ENCODE measurements at regions of chr10 and their contacts with region 1.

Region 1: GRCh38 chr10:57657164-57657765 is 610.4 kb downstream of the IPMK start:
- DNase-seq: peak; percentile 30
- H3K4me3 ChIP-seq: no peak overlapping the region
- H3K27ac ChIP-seq: no peak overlapping the region
- H3K4me1 ChIP-seq: no peaks in the 10 kb centered on the region
- H3K27me3 ChIP-seq: peaks cover 2% of the 10 kb centered on the region
- CTCF ChIP-seq: peak; percentile 80 to 87

Region 2: GRCh38 chr10:57338823-57339558 is 318.3 kb before region 1 on chr10:
- CTCF ChIA-PET with region 1: no interaction called
- dilution Hi-C with region 1: no loop called
- in situ Hi-C with region 1: loop called (anchors 25 kb)
- intact Hi-C with region 1: loop called (anchors 1 kb)
- DNase-seq: peak; percentile 12
- H3K4me3 ChIP-seq: no peak overlapping the region
- H3K27ac ChIP-seq: no peak overlapping the region
- H3K4me1 ChIP-seq: no peaks in the 10 kb centered on the region
- H3K27me3 ChIP-seq: no peaks in the 10 kb centered on the region
- CTCF ChIP-seq: peak; percentile 52 to 70

Region 3: GRCh38 chr10:57579926-57580325 is 77.3 kb before region 1 on chr10:
- CTCF ChIA-PET with region 1: interaction called, 3 read pairs
- dilution Hi-C with region 1: no loop called
- in situ Hi-C with region 1: loop called (anchors 5 kb)
- intact Hi-C with region 1: loop called (anchors 1 kb)
- DNase-seq: peak; percentile 27
- H3K4me3 ChIP-seq: no peak overlapping the region
- H3K27ac ChIP-seq: no peak overlapping the region
- H3K4me1 ChIP-seq: no peaks in the 10 kb centered on the region
- H3K27me3 ChIP-seq: peaks cover under 1% of the 10 kb centered on the region
- CTCF ChIP-seq: peak; percentile 37 to 75

Region 4: DNA sequence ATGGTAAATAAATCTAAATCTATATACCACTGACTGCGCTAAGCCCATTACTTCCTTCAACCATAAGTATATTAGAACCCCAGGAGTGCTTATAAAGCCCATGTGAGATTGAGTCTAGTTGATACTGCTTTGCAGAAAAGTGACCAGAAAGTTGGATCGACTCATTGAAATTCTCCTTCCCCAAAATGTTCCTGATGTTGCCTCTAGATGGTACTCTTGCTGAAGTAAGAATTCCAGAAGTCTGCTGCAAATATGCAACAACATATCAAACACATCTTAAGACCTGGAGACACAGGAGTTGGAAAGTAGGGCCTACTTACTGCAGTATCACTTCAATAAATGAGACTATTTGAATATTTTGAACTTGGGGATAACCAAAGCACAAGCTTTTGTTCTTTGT is 59.6 kb after region 1 on chr10:
- CTCF ChIA-PET with region 1: no interaction called
- dilution Hi-C with region 1: no loop called
- in situ Hi-C with region 1: no loop called
- intact Hi-C with region 1: loop called (anchors 5 kb)
- DNase-seq: peak; percentile 45
- H3K4me3 ChIP-seq: no peak overlapping the region
- H3K27ac ChIP-seq: no peak overlapping the region
- H3K4me1 ChIP-seq: no peaks in the 10 kb centered on the region
- H3K27me3 ChIP-seq: no peaks in the 10 kb centered on the region
- CTCF ChIP-seq: peak; percentile 56 to 75

Region 5: GRCh38 chr10:57785546-57786284 is 128.4 kb after region 1 on chr10:
- CTCF ChIA-PET with region 1: no interaction called
- dilution Hi-C with region 1: no loop called
- in situ Hi-C with region 1: no loop called
- intact Hi-C with region 1: no loop called
- DNase-seq: peak; percentile 60
- H3K4me3 ChIP-seq: no peak overlapping the region
- H3K27ac ChIP-seq: peak overlapping the region; percentile 30
- H3K4me1 ChIP-seq: peaks cover 20% of the 10 kb centered on the region
- H3K27me3 ChIP-seq: no peaks in the 10 kb centered on the region
- CTCF ChIP-seq: no peak

Region 6: DNA sequence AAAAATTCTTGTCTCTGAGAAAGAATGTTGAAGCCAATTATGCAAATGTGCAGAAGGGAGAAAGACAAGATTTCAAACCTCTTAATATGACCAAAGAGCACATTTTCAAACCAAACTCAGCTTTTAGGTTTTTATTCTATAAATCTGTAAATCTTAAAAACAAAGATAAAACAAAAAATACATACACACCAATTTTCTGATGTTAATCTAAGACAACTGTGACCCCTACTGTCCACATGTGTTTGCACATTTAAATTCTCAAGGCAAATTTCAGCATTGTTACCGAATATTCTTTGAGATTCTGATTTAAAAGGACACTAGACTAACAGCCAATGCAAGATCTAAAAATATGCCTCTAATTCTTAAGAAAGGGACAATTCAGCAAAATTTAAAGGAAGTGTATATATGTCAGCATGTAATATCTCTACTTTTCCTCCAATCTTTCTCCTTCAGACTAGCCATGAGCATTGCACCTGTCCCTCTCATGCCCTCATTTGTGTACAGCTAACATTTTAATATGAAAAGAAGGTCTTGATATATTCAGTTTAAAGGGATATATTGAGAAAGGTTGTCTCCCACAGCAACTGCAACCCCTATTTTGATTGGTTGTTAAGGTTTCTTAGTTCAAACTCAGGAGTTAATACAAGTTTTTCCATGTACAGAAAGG is 192.6 kb after region 1 on chr10:
- CTCF ChIA-PET with region 1: no interaction called
- dilution Hi-C with region 1: no loop called
- in situ Hi-C with region 1: no loop called
- intact Hi-C with region 1: loop called (anchors 2 kb)
- DNase-seq: peak; percentile 13
- H3K4me3 ChIP-seq: no peak overlapping the region
- H3K27ac ChIP-seq: no peak overlapping the region
- H3K4me1 ChIP-seq: no peaks in the 10 kb centered on the region
- H3K27me3 ChIP-seq: no peaks in the 10 kb centered on the region
- CTCF ChIP-seq: peak; percentile 50 to 53

Region 7: DNA sequence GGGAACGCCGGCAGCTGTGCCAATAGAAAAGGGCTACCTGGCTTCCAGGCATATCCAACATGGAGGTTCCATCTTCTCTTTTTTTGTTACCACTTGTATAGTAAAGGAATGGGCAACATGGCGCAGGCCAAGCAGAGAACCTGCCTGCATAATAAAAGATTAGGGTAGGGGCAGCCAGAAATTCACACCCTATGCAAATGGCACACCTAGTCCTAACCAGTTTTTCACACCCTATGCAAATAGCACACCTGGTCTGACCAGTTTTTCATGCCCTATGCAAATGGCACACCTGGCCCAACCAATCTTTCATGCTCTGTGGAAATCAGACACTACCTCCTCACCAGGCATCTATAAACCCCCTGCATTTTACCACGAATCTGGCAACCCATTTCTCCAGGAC is 241.0 kb after region 1 on chr10:
- CTCF ChIA-PET with region 1: no interaction called
- dilution Hi-C with region 1: no loop called
- in situ Hi-C with region 1: no loop called
- intact Hi-C with region 1: no loop called
- DNase-seq: peak; percentile 11
- H3K4me3 ChIP-seq: no peak overlapping the region
- H3K27ac ChIP-seq: no peak overlapping the region
- H3K4me1 ChIP-seq: no peaks in the 10 kb centered on the region
- H3K27me3 ChIP-seq: no peaks in the 10 kb centered on the region
- CTCF ChIP-seq: no peak

Region 8: DNA sequence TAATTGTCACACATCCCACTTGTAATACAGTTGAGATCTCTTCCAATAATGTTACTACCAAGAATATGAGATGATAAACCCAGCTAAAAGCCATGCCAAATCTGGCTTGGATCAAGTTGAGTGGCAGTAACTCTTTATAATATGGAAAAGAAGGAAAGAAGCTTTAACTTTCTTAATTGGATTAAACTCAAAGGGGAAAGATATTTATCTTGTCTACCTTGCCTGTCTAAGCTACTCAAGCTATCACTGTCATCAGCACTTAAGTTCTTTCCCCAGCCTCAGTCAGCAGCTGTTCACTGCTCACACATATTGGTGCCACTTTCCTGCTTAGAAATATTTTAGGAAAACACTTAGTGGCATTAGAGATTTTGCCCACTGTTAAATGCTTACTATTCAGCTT is 259.8 kb after region 1 on chr10:
- CTCF ChIA-PET with region 1: no interaction called
- dilution Hi-C with region 1: no loop called
- in situ Hi-C with region 1: no loop called
- intact Hi-C with region 1: no loop called
- DNase-seq: no peak
- H3K4me3 ChIP-seq: no peak overlapping the region
- H3K27ac ChIP-seq: no peak overlapping the region
- H3K4me1 ChIP-seq: peaks cover 7% of the 10 kb centered on the region
- H3K27me3 ChIP-seq: no peaks in the 10 kb centered on the region
- CTCF ChIP-seq: no peak

Region 9: DNA sequence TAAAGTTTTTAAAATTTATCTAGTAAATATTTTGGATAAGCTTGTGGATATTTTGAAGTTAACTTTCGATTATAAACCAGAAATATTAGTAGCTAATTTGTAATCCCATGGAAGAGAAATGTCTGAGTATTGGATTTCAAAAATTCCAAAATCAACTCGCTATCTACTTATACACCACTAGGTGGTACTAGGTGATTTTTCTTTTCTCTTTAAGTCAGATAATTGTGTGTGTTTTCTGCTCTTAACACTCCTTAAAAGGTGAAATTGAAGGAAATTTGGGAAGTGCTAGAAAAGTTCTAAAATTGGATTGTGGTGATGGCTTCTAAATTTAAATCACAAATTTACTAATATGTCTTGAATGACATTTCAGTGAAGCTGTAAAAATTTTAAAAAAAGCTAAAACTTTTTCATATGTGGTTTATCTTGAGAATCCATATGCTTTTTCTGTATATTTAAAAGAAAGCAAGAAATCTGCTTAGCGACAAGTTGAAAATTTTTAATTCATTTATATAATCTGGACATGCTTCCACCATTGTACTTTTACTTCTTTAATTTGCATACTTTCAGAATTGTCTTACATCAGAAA is 520.2 kb after region 1 on chr10:
- CTCF ChIA-PET with region 1: no interaction called
- dilution Hi-C with region 1: no loop called
- in situ Hi-C with region 1: no loop called
- intact Hi-C with region 1: no loop called
- DNase-seq: no peak
- H3K4me3 ChIP-seq: no peak overlapping the region
- H3K27ac ChIP-seq: no peak overlapping the region
- H3K4me1 ChIP-seq: peaks cover 18% of the 10 kb centered on the region
- H3K27me3 ChIP-seq: peaks cover 2% of the 10 kb centered on the region
- CTCF ChIP-seq: peak; percentile 55 to 60

Measured in mammary epithelial cell (primary cell).